ENCODE measurements at regions of chr7 and their contacts with region 1.

Region 1: GRCh38 chr7:94276795-94277194 is 117.9 kb upstream of the COL1A2 start:
- DNase-seq: peak; percentile 73
- H3K4me3 ChIP-seq: no peak overlapping the region
- H3K27ac ChIP-seq: no peak overlapping the region
- H3K4me1 ChIP-seq: peaks cover 9% of the 10 kb centered on the region
- H3K27me3 ChIP-seq: no peaks in the 10 kb centered on the region
- CTCF ChIP-seq: peak; percentile 67

Region 2: GRCh38 chr7:93622036-93623033 is 654.5 kb before region 1 on chr7:
- CTCF ChIA-PET with region 1: no interaction called
- POLR2A ChIA-PET with region 1: no interaction called
- intact Hi-C with region 1: loop called (anchors 5 kb)
- DNase-seq: peak; percentile 71
- H3K4me3 ChIP-seq: peak overlapping the region; percentile 30
- H3K27ac ChIP-seq: no peak overlapping the region
- H3K4me1 ChIP-seq: no peaks in the 10 kb centered on the region
- H3K27me3 ChIP-seq: no peaks in the 10 kb centered on the region
- CTCF ChIP-seq: peak; percentile 65

Region 3: GRCh38 chr7:93715234-93715633 is 561.6 kb before region 1 on chr7:
- CTCF ChIA-PET with region 1: no interaction called
- POLR2A ChIA-PET with region 1: no interaction called
- intact Hi-C with region 1: loop called (anchors 5 kb)
- DNase-seq: peak; percentile 68
- H3K4me3 ChIP-seq: no peak overlapping the region
- H3K27ac ChIP-seq: no peak overlapping the region
- H3K4me1 ChIP-seq: no peaks in the 10 kb centered on the region
- H3K27me3 ChIP-seq: peaks cover 5% of the 10 kb centered on the region
- CTCF ChIP-seq: peak; percentile 77

Region 4: GRCh38 chr7:93902777-93903423 is 373.9 kb before region 1 on chr7:
- CTCF ChIA-PET with region 1: no interaction called
- POLR2A ChIA-PET with region 1: no interaction called
- intact Hi-C with region 1: loop called (anchors 1 kb)
- DNase-seq: peak; percentile 82
- H3K4me3 ChIP-seq: no peak overlapping the region
- H3K27ac ChIP-seq: no peak overlapping the region
- H3K4me1 ChIP-seq: peaks cover 2% of the 10 kb centered on the region
- H3K27me3 ChIP-seq: no peaks in the 10 kb centered on the region
- CTCF ChIP-seq: peak; percentile 89

Region 5: DNA sequence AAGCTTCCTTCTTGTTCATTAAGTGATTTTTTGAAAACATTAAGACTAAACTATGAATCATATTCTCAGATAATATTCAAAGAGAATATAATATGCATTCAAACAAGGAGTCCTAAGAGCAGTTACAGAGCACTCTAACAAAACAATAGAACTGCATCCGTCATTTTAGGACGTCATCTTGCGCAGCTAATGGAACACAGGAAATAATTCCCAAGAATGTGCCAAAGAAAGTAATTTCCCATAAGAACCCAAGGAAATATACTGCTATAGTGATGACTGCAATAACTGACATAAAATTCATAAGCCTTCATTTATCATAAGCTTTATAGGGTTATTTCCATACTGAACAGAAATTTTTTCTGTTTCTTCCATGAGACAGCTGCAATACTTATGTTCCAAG is 204.5 kb after region 1 on chr7:
- CTCF ChIA-PET with region 1: no interaction called
- POLR2A ChIA-PET with region 1: no interaction called
- intact Hi-C with region 1: no loop called
- DNase-seq: no peak
- H3K4me3 ChIP-seq: no peak overlapping the region
- H3K27ac ChIP-seq: no peak overlapping the region
- H3K4me1 ChIP-seq: no peaks in the 10 kb centered on the region
- H3K27me3 ChIP-seq: no peaks in the 10 kb centered on the region
- CTCF ChIP-seq: no peak